ENCODE measurements at regions of chr12 and their contacts with region 1.

Region 1: GRCh38 chr12:99810718-99811593 is 163.4 kb downstream of the GARIN6 start:
- DNase-seq: no peak
- H3K4me3 ChIP-seq: no peak overlapping the region
- H3K4me3 Mint-ChIP-seq: no peak overlapping the region
- H3K27ac Mint-ChIP-seq: no peak overlapping the region
- H3K4me1 ChIP-seq: no peaks in the 10 kb centered on the region
- H3K4me1 Mint-ChIP-seq: no peaks in the 10 kb centered on the region
- H3K27me3 ChIP-seq: no peaks in the 10 kb centered on the region
- H3K27me3 Mint-ChIP-seq: peaks cover 7% of the 10 kb centered on the region
- CTCF ChIP-seq: peak in 1 of 2 experiments; percentile 34

Region 2: DNA sequence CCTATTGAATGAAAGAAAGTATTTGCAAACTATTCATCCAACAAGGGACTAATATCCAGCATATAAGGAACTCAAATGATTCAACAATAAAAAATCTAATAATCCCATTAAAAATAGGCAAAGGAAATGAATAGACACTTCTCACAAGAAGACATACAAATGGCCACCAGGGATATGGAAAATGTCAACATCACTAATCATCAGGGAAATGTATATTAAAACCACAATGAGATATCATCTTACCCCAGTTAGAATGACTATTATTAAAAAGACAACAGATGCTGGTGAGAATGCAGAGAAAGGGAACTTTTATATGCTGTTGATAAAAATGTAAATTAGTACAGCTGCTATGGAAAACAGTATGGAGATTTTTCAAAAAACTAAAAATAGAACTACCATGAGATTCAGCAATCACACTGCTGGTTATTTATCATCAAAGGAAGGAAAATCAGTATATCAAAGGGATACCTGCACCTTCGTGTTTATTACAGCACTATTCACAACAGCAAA is 74.1 kb before region 1 on chr12:
- CTCF ChIA-PET with region 1: no interaction called
- POLR2A ChIA-PET with region 1: no interaction called
- intact Hi-C with region 1: no loop called
- DNase-seq: no peak
- H3K4me3 ChIP-seq: no peak overlapping the region
- H3K4me3 Mint-ChIP-seq: no peak overlapping the region
- H3K27ac Mint-ChIP-seq: no peak overlapping the region
- H3K4me1 ChIP-seq: no peaks in the 10 kb centered on the region
- H3K4me1 Mint-ChIP-seq: no peaks in the 10 kb centered on the region
- H3K27me3 ChIP-seq: no peaks in the 10 kb centered on the region
- H3K27me3 Mint-ChIP-seq: peaks cover 13% of the 10 kb centered on the region
- CTCF ChIP-seq: no peak

Region 3: GRCh38 chr12:99984271-99985128 is 173.5 kb after region 1 on chr12 and contains the start of gene ANKS1B:
- CTCF ChIA-PET with region 1: no interaction called
- POLR2A ChIA-PET with region 1: no interaction called
- intact Hi-C with region 1: loop called (anchors 5 kb)
- DNase-seq: peak; percentile 62 to 74
- H3K4me3 ChIP-seq: peak within 1 kb of the TSS; percentile 45
- H3K4me3 Mint-ChIP-seq: peak within 1 kb of the TSS; percentile 85
- H3K27ac Mint-ChIP-seq: no peak within 1 kb of the TSS
- H3K4me1 ChIP-seq: 0 out of 2 replicates have a peak, but pooled peaks cover 6% of the 10 kb centered on the region
- H3K4me1 Mint-ChIP-seq: peaks cover 7% of the 10 kb centered on the region
- H3K27me3 ChIP-seq: peaks cover 2% of the 10 kb centered on the region; the same call in 1 of the 2 replicates
- H3K27me3 Mint-ChIP-seq: peaks cover 14% of the 10 kb centered on the region
- CTCF ChIP-seq: no peak
- total RNA-seq, gene ANKS1B: 0.61 and 1.1 TPM in 2 replicates

Region 4: GRCh38 chr12:100020370-100020769 is 209.4 kb after region 1 on chr12:
- CTCF ChIA-PET with region 1: no interaction called
- POLR2A ChIA-PET with region 1: no interaction called
- intact Hi-C with region 1: loop called (anchors 10 kb)
- DNase-seq: no peak
- H3K4me3 ChIP-seq: no peak overlapping the region
- H3K4me3 Mint-ChIP-seq: no peak overlapping the region
- H3K27ac Mint-ChIP-seq: no peak overlapping the region
- H3K4me1 ChIP-seq: no peaks in the 10 kb centered on the region
- H3K4me1 Mint-ChIP-seq: no peaks in the 10 kb centered on the region
- H3K27me3 ChIP-seq: no peaks in the 10 kb centered on the region
- H3K27me3 Mint-ChIP-seq: no peaks in the 10 kb centered on the region
- CTCF ChIP-seq: no peak

Region 5: GRCh38 chr12:100554608-100555077 is 743.7 kb after region 1 on chr12:
- CTCF ChIA-PET with region 1: no interaction called
- POLR2A ChIA-PET with region 1: no interaction called
- intact Hi-C with region 1: loop called (anchors 1 kb)
- DNase-seq: peak; percentile 40 to 83
- H3K4me3 ChIP-seq: no peak overlapping the region
- H3K4me3 Mint-ChIP-seq: no peak overlapping the region
- H3K27ac Mint-ChIP-seq: no peak overlapping the region
- H3K4me1 ChIP-seq: no peaks in the 10 kb centered on the region
- H3K4me1 Mint-ChIP-seq: no peaks in the 10 kb centered on the region
- H3K27me3 ChIP-seq: no peaks in the 10 kb centered on the region
- H3K27me3 Mint-ChIP-seq: peaks cover 2% of the 10 kb centered on the region
- CTCF ChIP-seq: peak; percentile 86 to 96

Measured in Caco-2 (cell line).